CD8-positive, alpha-beta memory T cell (primary cell): ENCODE measurements at regions of chr17 and their contacts with region 1.

Region 1: DNA sequence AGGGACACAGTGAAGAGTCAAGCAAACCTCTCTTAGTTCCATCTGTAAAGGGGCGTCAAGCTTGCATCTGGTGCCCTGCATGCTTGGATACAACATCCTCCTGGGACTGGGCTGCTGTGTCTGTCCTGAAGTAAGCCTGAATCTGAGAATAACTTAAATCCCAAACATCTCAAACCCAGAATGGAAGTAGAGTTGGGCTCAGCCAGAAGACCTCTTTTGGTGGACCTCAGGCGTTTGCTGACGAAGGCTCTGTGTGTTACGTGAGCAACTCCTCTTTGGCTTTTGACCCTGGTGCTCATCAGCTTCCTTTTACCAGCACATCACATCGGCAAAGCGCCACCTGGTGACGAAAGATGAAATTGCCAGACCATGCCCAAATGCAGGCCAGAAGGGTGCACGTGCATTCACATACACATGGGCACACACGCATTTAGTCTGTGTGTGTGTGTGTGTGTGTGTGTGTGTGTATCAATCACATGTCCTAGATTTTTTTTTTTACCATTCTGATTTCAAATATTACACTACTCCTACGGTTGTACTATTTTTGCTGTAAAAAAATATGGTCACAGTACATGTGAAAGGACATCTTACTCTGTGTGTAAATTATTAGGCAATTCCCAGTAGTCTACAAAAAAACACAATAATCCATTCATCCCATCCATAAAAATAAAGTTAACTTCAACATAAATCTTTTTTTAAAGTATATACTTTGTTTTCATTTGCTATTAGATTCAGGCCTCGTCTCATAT is 41.1 kb upstream of the FOXJ1 start:
- DNase-seq: peak; percentile 84 to 94 (median 85)
- H3K4me3 ChIP-seq: peak overlapping the region; percentile 38
- H3K4me3 Mint-ChIP-seq: peak overlapping the region; percentile 14 to 73 (median 49)
- H3K27ac ChIP-seq: no peak overlapping the region
- H3K27ac Mint-ChIP-seq: peak overlapping the region; percentile 88 to 96 (median 92)
- H3K4me1 ChIP-seq: peaks cover 70% of the 10 kb centered on the region
- H3K4me1 Mint-ChIP-seq: peaks cover 42 to 66% (median 49%) of the 10 kb centered on the region in 3 donors
- H3K27me3 ChIP-seq: no peaks in the 10 kb centered on the region
- H3K27me3 Mint-ChIP-seq: no peaks in the 10 kb centered on the region

Region 2: DNA sequence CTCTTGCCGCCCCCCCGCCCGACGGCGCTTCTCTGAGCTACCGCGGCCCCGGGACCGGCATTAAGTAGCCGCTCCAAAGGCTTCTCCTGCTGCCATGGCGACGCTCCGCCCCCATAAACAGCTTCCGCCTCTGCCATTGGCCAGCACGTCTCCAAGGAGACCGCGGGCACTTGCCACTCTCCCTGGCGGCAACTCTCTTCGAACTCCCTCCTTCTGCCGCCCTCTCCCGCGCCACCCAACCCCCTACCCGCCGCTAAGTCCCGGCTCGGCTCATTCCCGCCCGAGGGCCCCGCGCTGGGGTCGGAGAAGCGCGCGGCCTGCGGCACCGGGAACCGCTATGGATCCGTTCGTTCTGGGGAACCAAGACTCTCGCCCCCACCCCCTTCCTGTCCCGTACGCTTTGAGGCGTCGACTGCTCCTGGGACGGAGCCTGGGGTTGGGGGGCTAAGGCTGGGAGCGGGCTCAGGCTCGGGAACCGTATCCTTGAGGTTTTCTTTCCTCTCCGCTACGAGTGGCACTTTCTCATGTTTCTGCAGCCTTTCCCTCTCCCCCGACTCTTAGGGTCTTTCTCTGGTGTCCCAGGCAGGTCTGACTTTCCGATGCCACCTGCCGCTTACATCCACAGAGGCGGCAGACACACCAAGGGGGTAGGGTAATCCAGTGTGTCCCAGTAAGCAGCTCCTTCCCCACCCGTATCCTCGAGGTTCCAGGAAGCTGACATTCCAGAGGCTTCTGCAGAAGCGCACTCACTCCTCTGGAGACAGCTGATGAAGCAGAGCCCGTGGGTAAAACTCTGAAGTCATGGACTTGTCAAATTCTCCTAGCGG is 40.8 kb before region 1 on chr17 and contains the start of gene FOXJ1:
- CTCF ChIA-PET with region 1: interaction called, 65 read pairs
- POLR2A ChIA-PET with region 1: interaction called, 7 read pairs
- DNase-seq: peak; percentile 83 to 95 (median 91)
- H3K4me3 ChIP-seq: peak within 1 kb of the TSS; percentile 66
- H3K4me3 Mint-ChIP-seq: peak within 1 kb of the TSS; percentile 81 to 90 (median 85)
- H3K27ac ChIP-seq: no peak within 1 kb of the TSS
- H3K27ac Mint-ChIP-seq: peak within 1 kb of the TSS; percentile 57 to 92 (median 84)
- H3K4me1 ChIP-seq: peaks cover 60% of the 10 kb centered on the region
- H3K4me1 Mint-ChIP-seq: peaks cover 51 to 68% (median 53%) of the 10 kb centered on the region in 3 donors
- H3K27me3 ChIP-seq: no peaks in the 10 kb centered on the region
- H3K27me3 Mint-ChIP-seq: peaks cover 0 to 7% of the 10 kb centered on the region in 2 donors
- total RNA-seq, gene FOXJ1: 0.64 to 0.94 TPM

Region 3: DNA sequence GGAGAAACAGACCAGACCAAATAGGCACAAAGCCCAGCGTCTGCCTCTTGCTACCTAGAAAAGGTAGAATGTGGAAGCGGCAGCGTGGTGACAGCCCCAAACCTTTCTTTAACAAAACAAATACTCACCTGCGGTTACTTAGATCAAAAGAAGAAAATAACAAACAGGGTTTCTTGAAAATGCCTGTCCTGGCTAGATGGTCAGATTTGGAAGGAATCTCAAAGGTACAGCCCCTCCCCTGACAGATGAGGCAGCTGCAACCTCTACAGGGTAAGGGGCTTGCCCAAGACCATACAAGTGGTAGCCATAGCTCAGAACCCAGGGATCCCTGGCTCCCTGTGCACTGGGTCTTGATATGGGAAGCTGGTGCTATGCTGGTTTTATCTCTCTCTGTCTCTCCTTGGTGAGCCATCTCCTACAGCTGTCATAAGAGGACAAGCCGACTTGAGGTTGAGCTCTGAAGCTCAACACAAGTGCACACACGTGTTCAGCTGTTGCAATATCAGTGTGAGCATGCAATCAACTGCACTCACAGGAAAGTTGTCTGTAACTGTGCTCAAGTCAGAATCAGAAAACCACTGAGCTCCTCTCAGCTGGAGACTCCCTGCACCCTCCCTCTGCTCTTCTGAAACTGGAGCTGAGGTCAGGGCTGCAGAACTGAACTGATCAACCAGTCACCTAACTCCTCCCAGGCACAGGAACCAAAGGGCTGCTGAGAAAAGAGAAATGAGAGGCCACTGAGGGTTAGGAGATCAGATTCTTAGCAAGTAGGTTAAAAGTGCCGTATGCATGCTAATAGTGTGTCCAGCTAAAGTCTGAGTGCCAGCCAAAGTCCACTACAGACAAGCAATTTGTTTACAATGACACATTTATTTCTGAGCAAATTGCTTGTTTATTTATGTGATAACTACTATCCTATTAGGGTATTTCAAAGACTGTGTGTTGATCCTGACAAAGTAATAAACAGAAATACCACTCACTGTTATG is 64.2 kb after region 1 on chr17:
- CTCF ChIA-PET with region 1: interaction called, 11 read pairs
- POLR2A ChIA-PET with region 1: interaction called, 4 read pairs
- DNase-seq: peak in 2 of 5 donors; percentile 44 to 60
- H3K4me3 ChIP-seq: peak overlapping the region; percentile 54
- H3K4me3 Mint-ChIP-seq: peak overlapping the region; percentile 14 to 74 (median 59)
- H3K27ac ChIP-seq: peak overlapping the region; percentile 19
- H3K27ac Mint-ChIP-seq: peak overlapping the region; percentile 37 to 95 (median 80)
- H3K4me1 ChIP-seq: peaks cover 58% of the 10 kb centered on the region
- H3K4me1 Mint-ChIP-seq: peaks cover 22 to 57% (median 47%) of the 10 kb centered on the region in 3 donors
- H3K27me3 ChIP-seq: no peaks in the 10 kb centered on the region
- H3K27me3 Mint-ChIP-seq: peaks cover 0 to under 1% of the 10 kb centered on the region in 2 donors

Region 4: GRCh38 chr17:76271669-76272540 is 89.7 kb after region 1 on chr17:
- CTCF ChIA-PET with region 1: interaction called, 50 read pairs
- POLR2A ChIA-PET with region 1: interaction called, 11 read pairs
- DNase-seq: peak; percentile 44 to 82 (median 71)
- H3K4me3 ChIP-seq: peak overlapping the region; percentile 59
- H3K4me3 Mint-ChIP-seq: peak overlapping the region; percentile 71 to 91 (median 82)
- H3K27ac ChIP-seq: peak overlapping the region; percentile 67
- H3K27ac Mint-ChIP-seq: peak overlapping the region; percentile 92 to 98 (median 95)
- H3K4me1 ChIP-seq: peaks cover 74% of the 10 kb centered on the region
- H3K4me1 Mint-ChIP-seq: peaks cover 54 to 79% (median 54%) of the 10 kb centered on the region in 3 donors
- H3K27me3 ChIP-seq: no peaks in the 10 kb centered on the region
- H3K27me3 Mint-ChIP-seq: no peaks in the 10 kb centered on the region

Region 5: GRCh38 chr17:76421044-76421407 is 238.8 kb after region 1 on chr17:
- CTCF ChIA-PET with region 1: no interaction called
- POLR2A ChIA-PET with region 1: no interaction called
- DNase-seq: no peak
- H3K4me3 ChIP-seq: no peak overlapping the region
- H3K4me3 Mint-ChIP-seq: no peak overlapping the region
- H3K27ac ChIP-seq: no peak overlapping the region
- H3K27ac Mint-ChIP-seq: peak overlapping the region in 2 of 8 donors; percentile 64 to 80
- H3K4me1 ChIP-seq: no peaks in the 10 kb centered on the region
- H3K4me1 Mint-ChIP-seq: peaks cover 14 to 40% (median 33%) of the 10 kb centered on the region in 3 donors
- H3K27me3 ChIP-seq: no peaks in the 10 kb centered on the region
- H3K27me3 Mint-ChIP-seq: no peaks in the 10 kb centered on the region